ENCODE measurements at regions of chrX and their contacts with region 1.

Region 1: DNA sequence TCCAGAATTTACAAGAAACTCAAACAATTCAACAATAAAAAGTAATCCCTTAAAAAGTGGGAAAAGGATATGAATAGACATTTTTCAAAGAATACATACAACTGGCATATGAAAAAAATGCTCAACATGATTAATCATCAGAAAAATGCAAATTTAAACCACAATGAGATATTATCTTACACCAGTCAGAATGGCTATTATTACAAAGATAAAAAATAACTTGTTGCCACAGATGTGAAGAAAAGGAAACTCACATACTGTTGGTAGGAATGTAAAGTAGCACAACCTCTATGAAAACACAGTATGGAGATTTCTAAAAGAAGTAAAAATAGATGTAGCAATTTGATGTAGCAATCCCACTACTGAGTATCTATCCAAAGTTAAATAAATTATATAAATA is 65.1 kb upstream of the DIAPH2 start:
- DNase-seq: no peak
- H3K4me3 ChIP-seq: no peak overlapping the region
- H3K27ac ChIP-seq: no peak overlapping the region
- H3K4me1 ChIP-seq: no peaks in the 10 kb centered on the region
- H3K27me3 ChIP-seq: no peaks in the 10 kb centered on the region
- CTCF ChIP-seq: no peak

Region 2: GRCh38 chrX:96464880-96465558 is 154.6 kb before region 1 on chrX:
- CTCF ChIA-PET with region 1: no interaction called
- POLR2A ChIA-PET with region 1: no interaction called
- intact Hi-C with region 1: no loop called
- DNase-seq: no peak
- H3K4me3 ChIP-seq: no peak overlapping the region
- H3K27ac ChIP-seq: no peak overlapping the region
- H3K4me1 ChIP-seq: no peaks in the 10 kb centered on the region
- H3K27me3 ChIP-seq: no peaks in the 10 kb centered on the region
- CTCF ChIP-seq: no peak

Region 3: DNA sequence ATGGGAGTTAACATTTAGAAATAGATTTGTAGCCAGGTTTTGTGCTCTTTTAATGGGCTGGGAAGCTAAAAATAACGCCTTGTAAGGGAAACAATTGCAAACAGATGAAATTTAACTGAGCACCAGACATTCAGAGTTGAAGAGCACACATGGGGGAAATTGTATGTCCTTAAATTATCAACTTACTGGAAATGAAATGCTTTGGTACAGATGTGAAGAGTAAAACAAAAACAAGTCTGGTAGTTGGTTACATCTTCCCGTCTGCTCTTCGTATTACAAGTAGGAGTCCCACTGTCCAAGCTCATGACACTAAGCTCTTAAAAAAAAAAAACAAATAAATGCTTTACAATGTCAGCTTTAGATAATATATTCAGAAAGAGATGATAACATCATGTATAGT is 204.6 kb after region 1 on chrX:
- CTCF ChIA-PET with region 1: no interaction called
- POLR2A ChIA-PET with region 1: interaction called, 10 read pairs
- intact Hi-C with region 1: no loop called
- DNase-seq: no peak
- H3K4me3 ChIP-seq: no peak overlapping the region
- H3K27ac ChIP-seq: no peak overlapping the region
- H3K4me1 ChIP-seq: no peaks in the 10 kb centered on the region
- H3K27me3 ChIP-seq: no peaks in the 10 kb centered on the region
- CTCF ChIP-seq: no peak

Region 4: GRCh38 chrX:97009376-97009775 is 389.8 kb after region 1 on chrX:
- CTCF ChIA-PET with region 1: no interaction called
- POLR2A ChIA-PET with region 1: no interaction called
- intact Hi-C with region 1: no loop called
- DNase-seq: no peak
- H3K4me3 ChIP-seq: no peak overlapping the region
- H3K27ac ChIP-seq: no peak overlapping the region
- H3K4me1 ChIP-seq: no peaks in the 10 kb centered on the region
- H3K27me3 ChIP-seq: no peaks in the 10 kb centered on the region
- CTCF ChIP-seq: no peak

Measured in A673 (cell line).